Spleen (tissue), 13 donors: ENCODE measurements at regions of chr15 and their contacts with region 1.

Region 1: DNA sequence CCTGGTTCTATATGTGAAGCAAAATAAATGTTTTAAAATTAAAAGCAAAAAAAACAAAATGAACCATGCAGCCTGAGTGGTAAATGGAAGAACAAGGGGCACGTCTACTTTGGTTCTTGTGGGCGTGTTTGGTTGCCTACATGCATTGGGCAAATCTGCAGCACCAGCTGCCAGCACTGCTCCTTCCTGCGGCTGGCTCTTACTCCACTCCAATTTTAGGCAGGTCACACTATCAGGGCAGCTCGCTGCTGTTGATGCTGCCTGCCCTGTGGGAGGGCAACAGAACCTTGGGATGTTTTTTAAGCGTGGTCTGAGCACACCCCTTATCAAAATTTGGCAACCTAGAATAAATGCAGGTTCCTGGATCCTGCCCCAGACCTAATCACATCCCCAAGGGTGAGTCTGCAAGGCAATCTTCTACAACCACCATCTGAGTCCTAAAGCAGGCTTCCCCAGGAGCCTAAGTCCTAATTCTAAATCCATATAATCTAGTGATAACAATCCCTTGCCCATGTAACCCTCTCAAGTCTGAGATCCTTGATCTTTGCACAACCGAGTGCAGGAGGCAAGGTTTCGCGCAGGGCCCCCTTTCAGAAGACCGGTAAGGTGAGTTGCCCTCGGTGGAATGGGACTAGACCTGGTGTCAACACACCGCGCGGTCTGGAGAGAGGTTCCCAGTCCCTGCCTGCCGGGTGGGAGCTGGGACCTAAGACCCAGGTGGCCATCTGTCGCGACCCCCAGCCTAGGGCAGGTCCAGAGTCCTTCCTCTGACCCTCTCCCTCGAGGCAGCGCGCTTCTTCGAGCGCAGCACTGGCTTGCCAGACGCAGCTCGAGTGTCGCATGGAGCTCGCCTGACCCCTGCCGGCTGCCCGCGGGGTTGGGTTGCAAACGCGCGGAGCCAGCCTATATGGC is 15.9 kb downstream of the IVD start:
- DNase-seq: peak; percentile 96
- H3K4me3 ChIP-seq: no peak overlapping the region
- H3K27ac ChIP-seq: no peak overlapping the region
- H3K4me1 ChIP-seq: peaks cover 11 to 24% (median 21%) of the 10 kb centered on the region in 6 donors
- H3K27me3 ChIP-seq: no peaks in the 10 kb centered on the region
- CTCF ChIP-seq: peak; percentile 86 to 97 (median 93)
- POLR2A ChIP-seq: no peak

Region 2: GRCh38 chr15:40323239-40323952 is 98.1 kb before region 1 on chr15 and contains the start of gene INAFM2:
- intact Hi-C with region 1: loop called (anchors 5 kb)
- DNase-seq: peak; percentile 98
- H3K4me3 ChIP-seq: peak within 1 kb of the TSS; percentile 63 to 93 (median 68)
- H3K27ac ChIP-seq: peak within 1 kb of the TSS; percentile 59 to 87 (median 81)
- H3K4me1 ChIP-seq: peaks cover 17 to 73% (median 50%) of the 10 kb centered on the region in 6 donors
- H3K27me3 ChIP-seq: no peaks in the 10 kb centered on the region
- CTCF ChIP-seq: peak; percentile 76 to 96 (median 85)
- POLR2A ChIP-seq: peak in 1 of 3 donors; percentile 65
- total RNA-seq, gene INAFM2: 16.8 to 29.6 (median 22.9) TPM

Region 3: DNA sequence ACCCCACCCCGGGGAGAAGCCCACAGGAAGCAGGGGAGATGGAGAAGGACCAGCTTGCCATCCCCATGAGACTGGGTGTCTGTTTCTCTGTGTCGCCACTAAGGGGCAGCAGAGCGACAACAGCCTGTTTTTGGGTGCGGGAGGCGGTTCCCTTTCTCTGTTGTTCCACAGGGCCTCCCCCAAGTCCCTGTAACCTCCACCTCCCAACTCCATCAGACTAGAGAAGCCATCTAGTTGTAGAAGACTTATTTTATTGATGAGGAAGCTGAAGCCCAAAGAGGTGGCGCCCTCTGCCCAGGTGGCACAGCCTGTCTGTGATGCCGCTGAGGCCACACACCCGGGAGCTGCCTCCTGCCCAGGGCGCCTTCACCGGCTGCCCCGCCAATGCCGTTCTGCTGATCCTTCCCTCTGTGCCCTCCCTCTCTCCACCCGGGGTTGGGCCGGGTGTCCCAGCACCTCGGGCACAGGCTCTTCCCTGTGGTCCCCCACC is 76.8 kb before region 1 on chr15:
- intact Hi-C with region 1: loop called (anchors 5 kb)
- DNase-seq: peak; percentile 91
- H3K4me3 ChIP-seq: no peak overlapping the region
- H3K27ac ChIP-seq: no peak overlapping the region
- H3K4me1 ChIP-seq: peaks cover 0 to 41% (median 27%) of the 10 kb centered on the region in 6 donors
- H3K27me3 ChIP-seq: peaks cover 0 to 5% (median 0%) of the 10 kb centered on the region in 7 donors
- CTCF ChIP-seq: peak; percentile 55 to 89 (median 78)
- POLR2A ChIP-seq: no peak